Uterus (tissue), 4 donors: ENCODE measurements at regions of chr11 and their contacts with region 1.

Region 1: GRCh38 chr11:62542750-62543567 is 3.6 kb downstream of the AHNAK start:
- DNase-seq: peak; percentile 78 to 86
- H3K4me3 ChIP-seq: peak overlapping the region; percentile 79 to 90
- H3K27ac ChIP-seq: peak overlapping the region; percentile 95 to 99
- H3K4me1 ChIP-seq: peaks cover 19 to 33% of the 10 kb centered on the region in 2 donors
- H3K27me3 ChIP-seq: no peaks in the 10 kb centered on the region
- CTCF ChIP-seq: peak; percentile 97 to 100 (median 98)
- POLR2A ChIP-seq: peak in 1 of 2 donors; percentile 18

Region 2: GRCh38 chr11:62186195-62186594 is 356.8 kb before region 1 on chr11:
- intact Hi-C with region 1: no loop called
- DNase-seq: no peak
- H3K4me3 ChIP-seq: no peak overlapping the region
- H3K27ac ChIP-seq: no peak overlapping the region
- H3K4me1 ChIP-seq: no peaks in the 10 kb centered on the region
- H3K27me3 ChIP-seq: no peaks in the 10 kb centered on the region
- CTCF ChIP-seq: no peak
- POLR2A ChIP-seq: no peak

Region 3: DNA sequence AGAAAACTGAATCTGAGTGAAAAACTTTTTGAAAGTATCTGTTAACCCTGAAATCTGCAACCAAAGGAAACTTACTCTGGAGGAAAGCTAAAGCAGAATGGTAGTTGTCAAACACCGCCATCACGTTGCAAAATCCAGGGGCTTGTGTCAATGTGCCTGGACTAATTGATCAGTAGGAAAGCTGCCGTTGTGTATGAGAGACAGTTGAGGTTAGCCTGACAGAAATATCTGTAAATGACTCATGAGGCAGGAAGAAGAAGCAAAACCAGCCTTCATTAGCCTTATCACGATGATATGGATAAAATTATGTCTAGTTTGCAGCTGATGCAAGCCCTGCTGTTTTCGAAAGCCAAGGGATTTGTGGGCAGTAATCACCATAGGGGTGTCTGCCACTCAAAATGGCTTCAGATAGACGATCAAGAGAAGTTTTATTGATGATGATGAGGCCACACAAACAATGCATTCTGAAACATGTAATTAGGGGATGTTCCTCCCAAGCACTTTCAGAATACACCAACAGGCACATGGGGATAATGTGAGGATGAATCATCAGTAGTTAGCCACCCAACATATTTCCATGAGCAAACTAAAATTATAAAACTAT is 115.2 kb before region 1 on chr11:
- intact Hi-C with region 1: loop called (anchors 2 kb)
- DNase-seq: no peak
- H3K4me3 ChIP-seq: no peak overlapping the region
- H3K27ac ChIP-seq: peak overlapping the region; percentile 59 to 81
- H3K4me1 ChIP-seq: peaks cover 0 to 18% of the 10 kb centered on the region in 2 donors
- H3K27me3 ChIP-seq: no peaks in the 10 kb centered on the region
- CTCF ChIP-seq: no peak
- POLR2A ChIP-seq: no peak